ENCODE measurements at regions of chr1 and their contacts with region 1.

Region 1: DNA sequence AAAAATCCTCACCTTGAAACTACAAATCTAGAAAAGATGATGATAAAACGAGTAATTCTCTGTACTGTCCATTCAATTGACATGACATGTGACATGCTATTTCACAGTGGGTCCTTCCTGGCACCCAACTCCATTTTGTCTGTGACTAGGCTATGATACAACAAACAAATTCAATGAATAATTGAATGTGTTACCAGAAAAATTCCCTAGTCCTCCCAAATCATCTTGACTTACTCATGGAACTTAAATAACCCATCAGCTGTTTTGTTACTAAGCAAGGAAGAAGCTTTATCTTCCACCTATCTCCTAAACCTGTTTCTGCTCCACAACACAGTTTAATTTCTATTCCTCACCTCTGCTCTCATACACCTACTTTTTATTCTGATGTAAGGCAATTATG is 30.4 kb downstream of the B3GALNT2 start:
- DNase-seq: no peak

Region 2: DNA sequence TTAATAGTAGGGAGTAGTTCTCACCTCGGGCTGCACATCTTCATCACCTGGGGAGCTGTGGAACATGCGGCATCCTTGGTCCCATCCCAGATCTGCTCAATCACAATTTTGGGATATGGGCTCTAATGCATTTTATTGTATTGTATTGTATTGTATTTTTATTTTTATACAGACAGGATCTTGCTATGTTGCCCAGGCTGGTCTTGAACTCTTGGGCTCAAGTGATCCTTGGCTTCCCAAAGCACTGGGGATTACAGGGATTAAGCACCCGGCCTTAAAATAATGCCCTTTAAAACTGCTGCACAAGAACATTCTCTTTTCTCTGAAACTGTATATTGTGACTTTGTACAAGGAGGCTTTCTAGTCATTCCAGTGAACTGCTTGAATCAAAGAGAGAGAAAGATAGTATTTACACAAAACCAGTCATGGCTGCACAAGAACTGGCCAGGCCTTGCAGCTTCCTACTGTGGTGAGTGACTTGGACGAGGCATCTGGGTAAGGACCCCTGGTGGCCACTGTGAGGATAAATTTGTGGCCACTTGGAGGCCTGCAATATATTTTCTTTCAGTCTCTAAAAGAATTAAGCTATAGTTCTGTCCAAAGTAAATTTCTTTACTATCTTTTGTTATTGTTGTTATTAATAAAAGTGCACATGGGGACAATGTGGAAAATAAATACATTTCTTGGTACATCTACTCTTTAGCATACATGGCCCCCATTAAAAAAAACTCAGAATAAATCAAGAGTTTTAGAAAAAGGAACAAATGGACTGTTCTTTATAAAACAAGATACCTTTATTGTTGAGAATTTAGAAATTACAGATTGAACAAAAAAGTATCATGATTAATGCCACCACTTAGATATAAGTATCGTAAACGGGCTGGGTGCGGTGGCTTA is 58.5 kb before region 1 on chr1:
- intact Hi-C with region 1: no loop called
- DNase-seq: peak; percentile 85

Region 3: GRCh38 chr1:235450886-235451483 is 22.8 kb before region 1 on chr1:
- intact Hi-C with region 1: loop called in 1 of 2 experiments (anchors 2 kb)
- DNase-seq: no peak

Region 4: DNA sequence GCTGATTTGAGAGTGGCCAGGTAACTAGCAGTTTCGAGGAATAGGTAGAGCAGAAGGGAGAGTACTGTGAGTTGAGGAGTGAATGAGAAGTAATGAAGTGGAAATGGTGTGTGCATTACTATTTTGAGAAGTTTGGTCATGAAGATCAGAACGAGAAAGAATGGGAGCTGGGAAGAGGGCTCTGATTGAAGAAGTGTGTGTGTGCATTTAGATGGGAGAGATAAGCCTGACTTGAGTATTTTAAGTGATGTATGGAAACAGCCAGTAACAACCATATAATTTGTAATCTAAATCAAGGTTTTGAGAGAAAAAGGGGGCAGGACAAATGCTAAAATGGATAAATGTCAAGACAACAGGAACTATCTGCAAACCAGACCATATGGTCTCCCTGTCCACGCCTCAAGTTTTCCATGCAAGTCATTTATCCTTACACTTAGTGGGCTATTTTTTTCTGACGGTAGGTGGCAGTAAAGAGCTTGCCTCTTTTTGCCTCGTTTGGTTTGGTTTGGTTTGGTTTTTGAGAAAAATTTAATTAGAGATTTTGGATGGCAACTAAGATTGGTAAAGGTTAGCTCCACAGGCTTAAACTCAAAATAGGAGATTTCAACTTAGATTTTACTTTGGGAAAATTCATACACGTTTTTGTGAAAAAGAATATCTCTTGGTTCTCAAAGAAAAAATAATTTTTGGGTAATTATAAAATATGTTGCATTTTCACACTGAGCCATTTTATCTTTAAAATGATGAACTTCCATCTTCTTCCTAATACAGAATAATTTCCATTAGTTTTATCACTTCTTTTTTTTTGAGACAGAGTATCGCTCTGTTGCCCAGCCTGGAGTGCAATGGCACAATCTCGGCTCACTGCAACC is 39.9 kb after region 1 on chr1:
- intact Hi-C with region 1: no loop called
- DNase-seq: no peak

Region 5: DNA sequence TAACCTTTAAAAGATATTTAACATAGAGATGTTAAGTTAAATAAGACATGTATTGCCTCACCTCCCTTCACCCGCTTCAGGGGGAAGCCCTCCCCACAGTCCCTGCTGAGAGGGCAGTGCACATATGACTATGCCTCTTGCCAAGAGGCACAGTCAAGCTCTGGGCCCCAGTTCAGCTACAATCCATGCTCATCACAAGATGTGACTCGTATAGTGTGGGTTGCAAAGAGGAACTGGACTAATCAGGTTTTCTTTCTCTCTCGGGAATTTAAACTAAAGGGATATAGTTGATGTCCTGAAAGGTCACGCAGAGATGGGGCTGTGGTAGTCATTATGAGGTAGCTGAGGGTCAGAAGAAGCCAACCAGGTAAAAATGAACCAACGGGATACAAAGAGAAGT is 357.3 kb after region 1 on chr1:
- intact Hi-C with region 1: no loop called
- DNase-seq: no peak

Region 6: GRCh38 chr1:236534151-236534651 is 1060.4 kb after region 1 on chr1:
- intact Hi-C with region 1: no loop called
- DNase-seq: no peak